ENCODE measurements at regions of chr1 and their contacts with region 1.

Region 1: DNA sequence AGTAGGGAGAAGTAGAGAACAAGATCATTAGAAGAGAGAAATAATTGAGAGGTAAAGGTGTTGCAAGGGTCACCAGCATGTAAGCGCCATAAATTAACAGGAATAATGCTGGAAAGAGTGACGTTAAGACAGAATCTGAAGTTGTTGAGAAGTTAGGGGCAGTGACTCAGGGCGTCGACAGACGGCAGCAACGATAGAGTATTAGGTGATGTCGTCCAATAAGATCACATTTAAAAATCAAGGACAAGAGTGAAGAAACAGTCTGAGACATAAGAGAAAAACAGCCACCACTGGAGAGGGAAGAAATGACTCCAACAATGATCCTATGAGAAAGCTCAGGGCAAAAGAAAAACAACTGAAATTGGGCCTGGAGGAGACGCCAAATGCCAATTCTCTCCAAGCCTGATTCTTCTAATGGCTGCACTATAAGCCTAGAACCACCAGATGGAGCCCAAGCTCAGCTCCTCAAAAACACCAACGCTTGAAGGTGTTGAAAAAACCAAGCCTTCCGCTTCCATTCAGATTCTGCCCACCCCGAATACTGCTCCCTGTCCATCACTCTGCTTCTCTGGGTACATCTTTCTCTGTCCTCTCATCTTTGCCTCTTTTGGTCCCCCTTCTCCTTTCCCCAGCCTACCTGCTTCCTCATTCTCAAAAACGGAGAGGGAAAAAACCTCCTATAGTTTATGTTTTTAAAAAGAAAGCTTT is 70.0 kb downstream of the LUZP1 start:
- DNase-seq: peak; percentile 72
- H3K4me3 ChIP-seq: no peak overlapping the region
- H3K27ac ChIP-seq: no peak overlapping the region
- H3K4me1 ChIP-seq: peaks cover 18% of the 10 kb centered on the region
- H3K27me3 ChIP-seq: no peaks in the 10 kb centered on the region
- CTCF ChIP-seq: peak; percentile 90

Region 2: DNA sequence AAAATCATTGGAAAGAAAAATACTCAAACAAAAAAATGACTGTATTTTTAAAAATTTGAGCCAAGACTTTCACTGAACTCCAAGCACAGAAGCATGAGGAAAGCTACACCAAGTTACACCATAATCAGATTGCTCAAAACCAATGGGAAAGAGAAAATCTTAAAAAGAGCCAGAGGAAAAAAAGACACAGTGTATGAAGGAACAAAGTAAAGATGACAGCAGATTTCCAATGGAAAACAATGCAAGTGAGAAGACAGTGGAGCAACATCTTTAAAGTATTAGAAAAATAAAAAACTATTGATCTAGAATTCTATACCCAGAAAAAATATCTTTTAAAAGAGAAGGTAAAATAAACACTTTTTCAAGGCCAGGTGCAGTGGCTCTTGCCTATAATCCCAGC is 794.8 kb before region 1 on chr1:
- intact Hi-C with region 1: no loop called
- DNase-seq: no peak
- H3K4me3 ChIP-seq: no peak overlapping the region
- H3K27ac ChIP-seq: no peak overlapping the region
- H3K4me1 ChIP-seq: no peaks in the 10 kb centered on the region
- H3K27me3 ChIP-seq: no peaks in the 10 kb centered on the region
- CTCF ChIP-seq: no peak

Region 3: DNA sequence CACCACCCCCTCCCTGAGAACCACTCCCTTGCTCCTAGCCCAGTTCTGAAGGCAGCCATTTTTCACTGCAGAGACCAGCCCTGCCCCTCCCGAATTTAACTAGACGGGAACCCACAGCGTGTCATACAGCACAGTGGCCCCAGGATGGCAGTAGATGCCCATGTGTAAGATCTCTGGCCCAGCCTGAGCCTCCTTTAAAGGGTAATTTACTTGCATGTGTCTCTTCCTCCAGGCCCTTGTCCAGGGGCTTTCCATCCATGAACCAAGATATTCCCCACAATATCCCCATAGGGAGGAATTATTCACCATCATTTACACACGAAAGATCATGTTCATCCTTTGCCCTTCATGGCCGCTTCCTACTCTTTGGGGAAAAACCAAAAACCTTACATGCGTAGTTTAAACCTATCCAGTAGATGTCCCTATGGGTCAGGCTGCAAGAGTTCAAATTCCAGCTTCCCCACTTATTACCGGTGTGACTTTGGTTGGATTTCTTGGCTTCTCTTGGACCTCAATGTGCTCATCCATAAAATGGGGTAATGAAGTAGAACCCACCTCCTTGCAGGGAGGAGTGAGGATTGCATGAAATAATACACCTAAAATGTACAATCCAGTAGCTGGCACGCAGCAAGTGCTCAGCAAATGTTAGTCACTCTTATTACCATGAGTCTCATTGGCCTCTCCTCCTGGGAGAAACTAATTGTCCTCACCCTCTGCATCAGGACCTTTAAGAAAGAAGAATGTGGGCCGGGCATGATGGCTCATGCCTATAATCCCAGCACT is 122.0 kb before region 1 on chr1:
- intact Hi-C with region 1: loop called (anchors 10 kb)
- DNase-seq: peak; percentile 71
- H3K4me3 ChIP-seq: no peak overlapping the region
- H3K27ac ChIP-seq: no peak overlapping the region
- H3K4me1 ChIP-seq: no peaks in the 10 kb centered on the region
- H3K27me3 ChIP-seq: no peaks in the 10 kb centered on the region
- CTCF ChIP-seq: peak; percentile 64

Region 4: GRCh38 chr1:23184212-23184934 is 85.8 kb after region 1 on chr1:
- intact Hi-C with region 1: loop called (anchors 2 kb)
- DNase-seq: no peak
- H3K4me3 ChIP-seq: peak overlapping the region; percentile 3
- H3K27ac ChIP-seq: no peak overlapping the region
- H3K4me1 ChIP-seq: no peaks in the 10 kb centered on the region
- H3K27me3 ChIP-seq: no peaks in the 10 kb centered on the region
- CTCF ChIP-seq: peak; percentile 50

Region 5: DNA sequence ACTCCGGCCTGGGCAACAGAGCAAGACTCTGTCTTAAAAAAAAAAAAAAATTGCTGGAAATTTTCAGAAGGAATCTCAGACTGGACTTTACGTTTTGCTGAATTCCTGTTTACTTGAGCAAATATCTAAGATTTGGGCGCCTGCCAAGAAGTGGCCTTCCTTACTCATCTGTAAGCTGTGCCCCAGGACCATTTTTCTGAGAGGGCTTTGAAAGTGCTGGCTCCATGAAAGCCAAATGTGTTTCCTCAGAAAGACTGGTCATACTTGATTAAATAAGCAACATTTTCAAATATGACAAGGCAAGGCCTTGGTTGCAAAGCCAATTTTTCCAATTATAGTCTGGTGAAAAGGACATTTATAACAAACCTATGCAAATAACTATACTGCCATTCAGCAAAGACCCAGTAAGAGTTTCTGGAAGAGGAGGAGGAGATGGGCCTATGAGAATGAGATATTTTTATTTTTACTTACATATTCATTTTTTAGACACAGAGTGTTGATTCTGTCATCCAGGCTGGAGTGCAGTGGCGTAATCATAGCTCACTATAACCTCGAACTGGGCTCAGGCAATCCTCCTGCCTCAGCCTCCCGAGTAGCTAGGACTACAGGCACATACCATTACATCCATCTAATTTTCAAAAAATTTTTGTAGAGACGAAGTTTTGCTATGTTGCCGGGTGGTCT is 175.0 kb after region 1 on chr1:
- intact Hi-C with region 1: loop called (anchors 10 kb)
- DNase-seq: peak; percentile 23
- H3K4me3 ChIP-seq: no peak overlapping the region
- H3K27ac ChIP-seq: no peak overlapping the region
- H3K4me1 ChIP-seq: no peaks in the 10 kb centered on the region
- H3K27me3 ChIP-seq: no peaks in the 10 kb centered on the region
- CTCF ChIP-seq: no peak

Measured in colonic mucosa (tissue), 4 donors.